Activated naive CD4-positive, alpha-beta T cell treated with anti-CD3 and anti-CD28 coated beads for 36 hours (primary cell): ENCODE measurements at regions of chr3 and their contacts with region 1.

Region 1: DNA sequence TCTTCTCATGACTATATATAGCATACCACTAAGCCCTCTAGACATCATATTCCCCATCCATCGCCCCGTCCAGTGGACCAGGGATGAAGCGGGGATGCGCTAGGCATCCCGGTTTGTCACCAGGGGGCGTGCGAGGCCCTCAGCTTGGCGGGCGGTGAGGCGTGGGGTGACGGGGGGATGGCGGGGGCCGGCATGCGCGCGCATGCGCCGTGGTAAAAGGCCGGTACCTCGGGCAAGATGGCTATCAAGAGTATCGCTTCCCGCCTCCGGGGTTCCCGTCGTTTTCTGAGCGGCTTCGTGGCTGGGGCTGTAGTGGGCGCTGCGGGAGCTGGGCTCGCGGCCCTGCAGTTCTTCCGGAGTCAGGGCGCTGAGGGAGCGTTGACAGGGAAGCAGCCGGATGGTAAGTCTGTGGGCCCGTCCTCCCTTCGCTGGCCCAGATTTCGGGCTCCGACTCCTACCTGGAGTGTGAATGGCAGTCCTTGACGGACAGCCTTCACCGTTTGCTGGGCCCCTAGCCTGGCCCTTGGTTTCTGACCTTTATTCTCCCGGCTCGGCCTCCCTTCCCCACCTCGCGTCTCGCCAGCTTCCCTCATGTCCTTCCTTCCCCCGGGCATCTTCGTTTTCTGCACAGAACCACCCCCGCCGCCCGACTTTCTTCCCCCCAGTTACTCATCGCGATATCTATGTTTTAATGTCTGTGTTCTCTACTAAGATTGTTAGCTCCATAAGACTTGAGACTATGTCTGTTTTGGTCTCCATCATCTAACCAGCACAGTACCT is at the start of gene EXOG:
- DNase-seq: peak; percentile 97
- H3K4me3 Mint-ChIP-seq: peak within 1 kb of the TSS; percentile 92
- H3K27ac Mint-ChIP-seq: peak within 1 kb of the TSS; percentile 85
- H3K4me1 Mint-ChIP-seq: peaks cover 16% of the 10 kb centered on the region
- H3K27me3 Mint-ChIP-seq: no peaks in the 10 kb centered on the region
- total RNA-seq, gene EXOG: 15.9 to 17.3 TPM

Region 2: DNA sequence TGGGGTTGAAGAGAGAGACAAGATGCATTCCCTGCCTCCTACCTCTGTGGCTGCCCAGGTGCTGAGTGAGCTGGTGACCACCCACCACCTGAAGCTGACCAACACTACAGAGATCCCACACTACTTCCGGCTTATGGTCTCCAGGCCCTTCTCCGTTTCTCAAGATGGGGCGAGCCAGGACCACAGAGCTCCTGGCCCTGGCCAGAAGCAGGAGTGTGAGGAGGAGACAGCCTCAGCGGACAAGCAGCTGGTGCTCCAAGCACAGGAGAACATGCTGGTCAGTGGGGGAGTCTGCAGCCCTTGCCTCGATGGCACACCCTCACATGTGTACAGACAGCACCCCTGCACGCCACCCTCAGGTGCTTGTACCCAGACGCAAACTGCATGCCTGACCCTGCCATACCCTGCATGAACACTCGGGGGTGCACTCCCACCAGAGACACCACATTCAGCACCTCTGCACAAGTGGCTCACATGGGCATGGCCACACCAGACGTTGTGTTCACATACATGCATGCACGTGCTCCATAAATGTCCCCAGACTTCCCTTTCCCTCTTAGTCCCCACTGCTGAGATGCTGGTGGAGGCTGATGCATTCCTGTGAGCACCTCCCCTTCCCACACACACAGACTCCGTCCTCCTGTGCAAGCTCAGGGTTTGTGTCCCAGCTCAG is 378.4 kb before region 1 on chr3:
- CTCF ChIA-PET with region 1: no interaction called
- intact Hi-C with region 1: loop called (anchors 1 kb)
- DNase-seq: peak; percentile 88
- H3K4me3 Mint-ChIP-seq: no peak overlapping the region
- H3K27ac Mint-ChIP-seq: no peak overlapping the region
- H3K4me1 Mint-ChIP-seq: peaks cover 4% of the 10 kb centered on the region
- H3K27me3 Mint-ChIP-seq: no peaks in the 10 kb centered on the region

Region 3: GRCh38 chr3:38453075-38453912 is 43.0 kb before region 1 on chr3 and contains the start of gene ACVR2B:
- CTCF ChIA-PET with region 1: no interaction called
- intact Hi-C with region 1: loop called (anchors 1 kb)
- DNase-seq: peak; percentile 74
- H3K4me3 Mint-ChIP-seq: peak within 1 kb of the TSS; percentile 96
- H3K27ac Mint-ChIP-seq: peak within 1 kb of the TSS; percentile 74
- H3K4me1 Mint-ChIP-seq: peaks cover 2% of the 10 kb centered on the region
- H3K27me3 Mint-ChIP-seq: no peaks in the 10 kb centered on the region
- total RNA-seq, gene ACVR2B: 6.5 to 6.9 TPM

Region 4: DNA sequence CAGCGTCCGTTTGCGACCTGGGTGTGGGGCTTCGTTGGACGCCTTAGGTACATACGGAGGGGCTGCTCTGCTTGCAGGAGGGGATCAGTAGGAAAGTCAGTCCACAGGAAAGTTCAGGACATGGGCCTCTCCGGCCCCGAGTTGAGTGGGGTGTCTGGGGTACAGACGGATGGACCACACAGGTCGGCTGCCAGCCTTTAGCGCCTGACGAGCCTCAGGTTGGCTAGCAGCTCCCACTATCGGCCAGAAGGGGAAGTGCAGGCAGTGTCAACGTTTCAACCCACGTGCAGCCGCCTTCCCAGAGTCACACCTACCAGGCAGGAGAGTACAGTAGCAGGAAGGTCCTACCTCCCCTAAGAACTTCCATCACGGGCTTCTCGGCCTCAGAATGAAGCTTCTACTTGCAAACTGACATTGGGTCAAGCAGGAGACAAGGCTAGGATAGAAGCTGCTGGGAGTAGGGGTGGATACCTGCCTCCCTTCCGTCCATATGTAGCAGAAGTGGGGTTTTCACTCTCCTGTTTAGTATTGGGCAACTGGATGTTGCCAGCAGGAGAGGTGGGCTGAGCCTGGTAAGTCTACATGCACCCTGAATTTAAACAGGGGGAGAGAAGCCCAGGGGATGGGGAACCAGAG is 155.0 kb after region 1 on chr3:
- CTCF ChIA-PET with region 1: interaction called, 17 read pairs
- intact Hi-C with region 1: loop called (anchors 1 kb)
- DNase-seq: peak; percentile 81
- H3K4me3 Mint-ChIP-seq: peak overlapping the region; percentile 27
- H3K27ac Mint-ChIP-seq: no peak overlapping the region
- H3K4me1 Mint-ChIP-seq: peaks cover 10% of the 10 kb centered on the region
- H3K27me3 Mint-ChIP-seq: peaks cover 14% of the 10 kb centered on the region

Region 5: GRCh38 chr3:38725726-38726419 is 229.6 kb after region 1 on chr3:
- CTCF ChIA-PET with region 1: no interaction called
- intact Hi-C with region 1: no loop called
- DNase-seq: no peak
- H3K4me3 Mint-ChIP-seq: no peak overlapping the region
- H3K27ac Mint-ChIP-seq: no peak overlapping the region
- H3K4me1 Mint-ChIP-seq: no peaks in the 10 kb centered on the region
- H3K27me3 Mint-ChIP-seq: peaks cover 10% of the 10 kb centered on the region

Region 6: GRCh38 chr3:39000008-39000450 is 503.7 kb after region 1 on chr3:
- CTCF ChIA-PET with region 1: interaction called, 4 read pairs
- intact Hi-C with region 1: loop called (anchors 1 kb)
- DNase-seq: no peak
- H3K4me3 Mint-ChIP-seq: no peak overlapping the region
- H3K27ac Mint-ChIP-seq: no peak overlapping the region
- H3K4me1 Mint-ChIP-seq: no peaks in the 10 kb centered on the region
- H3K27me3 Mint-ChIP-seq: no peaks in the 10 kb centered on the region